PC-9 (cell line): ENCODE measurements at regions of chr1 and their contacts with region 1.

Region 1: DNA sequence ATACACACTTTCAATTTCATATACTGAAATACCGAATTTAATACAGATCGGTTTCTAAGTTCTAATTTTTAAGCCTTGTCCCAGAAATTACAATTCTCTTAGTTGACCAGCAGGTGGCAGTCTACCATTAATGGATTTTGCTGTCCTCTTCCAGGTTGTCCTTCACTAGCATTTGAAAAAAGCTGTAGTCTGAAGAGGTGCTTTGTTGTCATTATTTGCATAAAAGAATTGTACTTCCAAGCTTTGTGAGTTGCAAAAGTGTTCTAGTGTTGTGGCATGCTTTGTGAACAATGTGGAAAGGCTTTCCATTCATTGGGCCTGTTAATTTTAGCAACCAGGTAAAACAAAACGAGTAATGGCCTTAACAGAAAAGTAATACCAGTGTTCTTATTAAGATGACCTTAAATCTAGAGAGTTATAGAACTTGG is 193.6 kb downstream of the RPS6KC1 start:
- DNase-seq: peak in 1 of 2 experiments; percentile 11
- H3K4me3 ChIP-seq: no peak overlapping the region
- H3K27ac ChIP-seq: no peak overlapping the region
- H3K4me1 ChIP-seq: no peaks in the 10 kb centered on the region
- H3K27me3 ChIP-seq: no peaks in the 10 kb centered on the region
- CTCF ChIP-seq: peak; percentile 93

Region 2: GRCh38 chr1:213122514-213122929 is 122.2 kb before region 1 on chr1:
- CTCF ChIA-PET with region 1: no interaction called
- POLR2A ChIA-PET with region 1: no interaction called
- intact Hi-C with region 1: loop called (anchors 5 kb)
- DNase-seq: no peak
- H3K4me3 ChIP-seq: no peak overlapping the region
- H3K27ac ChIP-seq: no peak overlapping the region
- H3K4me1 ChIP-seq: peaks cover 17% of the 10 kb centered on the region
- H3K27me3 ChIP-seq: no peaks in the 10 kb centered on the region
- CTCF ChIP-seq: peak; percentile 71

Region 3: GRCh38 chr1:213374369-213374768 is 129.7 kb after region 1 on chr1:
- CTCF ChIA-PET with region 1: no interaction called
- POLR2A ChIA-PET with region 1: no interaction called
- intact Hi-C with region 1: loop called (anchors 10 kb)
- DNase-seq: peak in 1 of 2 experiments; percentile 37
- H3K4me3 ChIP-seq: no peak overlapping the region
- H3K27ac ChIP-seq: no peak overlapping the region
- H3K4me1 ChIP-seq: no peaks in the 10 kb centered on the region
- H3K27me3 ChIP-seq: no peaks in the 10 kb centered on the region
- CTCF ChIP-seq: peak; percentile 97

Region 4: GRCh38 chr1:213564215-213564659 is 319.6 kb after region 1 on chr1:
- CTCF ChIA-PET with region 1: no interaction called
- POLR2A ChIA-PET with region 1: no interaction called
- intact Hi-C with region 1: loop called (anchors 10 kb)
- DNase-seq: no peak
- H3K4me3 ChIP-seq: no peak overlapping the region
- H3K27ac ChIP-seq: no peak overlapping the region
- H3K4me1 ChIP-seq: peaks cover 17% of the 10 kb centered on the region
- H3K27me3 ChIP-seq: no peaks in the 10 kb centered on the region
- CTCF ChIP-seq: peak; percentile 60

Region 5: GRCh38 chr1:214123061-214123784 is 878.5 kb after region 1 on chr1:
- CTCF ChIA-PET with region 1: no interaction called
- POLR2A ChIA-PET with region 1: no interaction called
- intact Hi-C with region 1: loop called (anchors 1 kb)
- DNase-seq: peak; percentile 41 to 90
- H3K4me3 ChIP-seq: peak overlapping the region; percentile 16; the same call in 1 of the 2 replicates
- H3K27ac ChIP-seq: peak overlapping the region; percentile 47
- H3K4me1 ChIP-seq: peaks cover 20% of the 10 kb centered on the region
- H3K27me3 ChIP-seq: no peaks in the 10 kb centered on the region
- CTCF ChIP-seq: peak; percentile 86